ENCODE measurements at regions of chr5 and their contacts with region 1.

Region 1: GRCh38 chr5:33997331-33997983 is 10.4 kb downstream of the AMACR start:
- DNase-seq: peak in 8 of 14 experiments; percentile 3 to 68 (median 22)
- ATAC-seq: peak; percentile 55
- H3K4me3 ChIP-seq: no peak overlapping the region
- H3K4me3 Mint-ChIP-seq: no peak overlapping the region
- H3K27ac ChIP-seq: no peak overlapping the region
- H3K27ac Mint-ChIP-seq: no peak overlapping the region
- H3K4me1 ChIP-seq: peaks cover 3% of the 10 kb centered on the region
- H3K4me1 Mint-ChIP-seq: peaks cover 6% of the 10 kb centered on the region
- H3K27me3 ChIP-seq: no peaks in the 10 kb centered on the region
- H3K27me3 Mint-ChIP-seq: no peaks in the 10 kb centered on the region
- CTCF ChIP-seq: peak; percentile 75

Region 2: DNA sequence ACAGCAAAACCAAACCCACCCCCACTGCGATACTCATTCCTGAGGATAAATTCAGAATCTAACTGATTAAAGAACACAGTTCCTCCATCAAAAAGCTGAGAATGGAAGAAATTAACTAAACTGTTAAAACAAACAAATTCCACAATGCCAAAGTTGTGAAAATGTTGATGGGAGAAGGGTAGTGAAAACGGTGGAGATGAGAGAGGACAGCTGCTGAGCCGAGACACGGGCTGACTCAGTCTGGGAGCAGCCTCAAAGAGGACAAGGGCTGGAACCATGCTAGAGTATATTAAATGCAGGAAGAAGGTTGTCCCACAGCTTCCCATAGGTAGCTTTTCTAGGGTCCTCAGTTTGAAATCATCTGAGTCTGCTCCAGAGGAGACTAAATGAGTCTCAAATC is 120.0 kb before region 1 on chr5:
- CTCF ChIA-PET with region 1: no interaction called
- POLR2A ChIA-PET with region 1: no interaction called
- intact Hi-C with region 1: no loop called
- DNase-seq: no peak
- ATAC-seq: no peak
- H3K4me3 ChIP-seq: no peak overlapping the region
- H3K4me3 Mint-ChIP-seq: no peak overlapping the region
- H3K27ac ChIP-seq: no peak overlapping the region
- H3K27ac Mint-ChIP-seq: no peak overlapping the region
- H3K4me1 ChIP-seq: no peaks in the 10 kb centered on the region
- H3K4me1 Mint-ChIP-seq: no peaks in the 10 kb centered on the region
- H3K27me3 ChIP-seq: no peaks in the 10 kb centered on the region
- H3K27me3 Mint-ChIP-seq: no peaks in the 10 kb centered on the region
- CTCF ChIP-seq: no peak

Region 3: DNA sequence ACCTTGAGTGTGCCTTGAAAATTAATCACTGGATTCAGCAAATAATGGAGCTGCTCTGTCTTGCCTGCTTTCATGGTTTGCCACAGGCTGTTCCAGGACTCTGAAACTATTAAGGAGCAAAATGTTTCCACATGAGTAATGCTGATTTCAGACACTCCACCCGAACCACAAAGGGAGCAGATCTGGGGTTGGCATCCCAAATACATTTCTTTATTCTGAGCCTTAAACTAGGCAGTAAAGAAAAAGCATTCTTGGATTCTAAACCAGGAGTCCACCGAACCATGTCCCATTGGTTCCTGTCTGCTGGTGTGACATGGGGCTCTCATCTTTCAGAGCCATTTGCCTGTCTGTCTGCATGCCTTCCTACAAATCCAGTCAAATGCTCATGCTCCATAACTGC is 55.7 kb after region 1 on chr5:
- CTCF ChIA-PET with region 1: no interaction called
- POLR2A ChIA-PET with region 1: no interaction called
- intact Hi-C with region 1: no loop called
- DNase-seq: no peak
- ATAC-seq: no peak
- H3K4me3 ChIP-seq: no peak overlapping the region
- H3K4me3 Mint-ChIP-seq: no peak overlapping the region
- H3K27ac ChIP-seq: no peak overlapping the region
- H3K27ac Mint-ChIP-seq: no peak overlapping the region
- H3K4me1 ChIP-seq: no peaks in the 10 kb centered on the region
- H3K4me1 Mint-ChIP-seq: no peaks in the 10 kb centered on the region
- H3K27me3 ChIP-seq: no peaks in the 10 kb centered on the region
- H3K27me3 Mint-ChIP-seq: no peaks in the 10 kb centered on the region
- CTCF ChIP-seq: no peak

Region 4: GRCh38 chr5:34459908-34460307 is 462.5 kb after region 1 on chr5:
- CTCF ChIA-PET with region 1: no interaction called
- POLR2A ChIA-PET with region 1: no interaction called
- intact Hi-C with region 1: loop called in 1 of 2 experiments (anchors 1 kb)
- DNase-seq: no peak
- ATAC-seq: no peak
- H3K4me3 ChIP-seq: no peak overlapping the region
- H3K4me3 Mint-ChIP-seq: no peak overlapping the region
- H3K27ac ChIP-seq: no peak overlapping the region
- H3K27ac Mint-ChIP-seq: no peak overlapping the region
- H3K4me1 ChIP-seq: no peaks in the 10 kb centered on the region
- H3K4me1 Mint-ChIP-seq: no peaks in the 10 kb centered on the region
- H3K27me3 ChIP-seq: no peaks in the 10 kb centered on the region
- H3K27me3 Mint-ChIP-seq: no peaks in the 10 kb centered on the region
- CTCF ChIP-seq: no peak

Region 5: DNA sequence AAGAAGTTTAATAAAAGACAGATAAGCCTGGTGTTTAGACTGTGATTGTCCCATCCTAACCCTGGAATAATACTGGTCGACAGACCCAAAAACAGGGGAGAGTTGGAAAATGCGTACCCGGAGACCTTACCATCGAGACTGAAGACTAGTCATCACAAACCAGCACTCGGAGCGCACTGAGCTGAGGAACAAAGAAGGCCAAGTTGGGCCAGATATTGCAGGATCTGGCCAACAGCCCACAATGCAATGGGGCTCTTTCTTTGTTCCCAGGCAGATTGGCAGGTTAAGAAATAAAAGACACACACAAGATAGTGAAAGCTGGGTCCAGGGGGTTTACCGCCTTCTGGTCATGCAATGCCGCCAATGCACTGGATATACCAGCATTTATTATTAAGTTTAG is 470.0 kb after region 1 on chr5:
- CTCF ChIA-PET with region 1: no interaction called
- POLR2A ChIA-PET with region 1: no interaction called
- intact Hi-C with region 1: loop called (anchors 1 to 2 kb)
- DNase-seq: no peak
- ATAC-seq: no peak
- H3K4me3 ChIP-seq: no peak overlapping the region
- H3K4me3 Mint-ChIP-seq: no peak overlapping the region
- H3K27ac ChIP-seq: no peak overlapping the region
- H3K27ac Mint-ChIP-seq: no peak overlapping the region
- H3K4me1 ChIP-seq: no peaks in the 10 kb centered on the region
- H3K4me1 Mint-ChIP-seq: no peaks in the 10 kb centered on the region
- H3K27me3 ChIP-seq: peaks cover 0 to 2% of the 10 kb centered on the region in 2 experiments
- H3K27me3 Mint-ChIP-seq: peaks cover 13% of the 10 kb centered on the region
- CTCF ChIP-seq: no peak